ENCODE measurements at regions of chr7 and their contacts with region 1.

Region 1: GRCh38 chr7:50206453-50207250 is 97.9 kb upstream of the IKZF1 start:
- DNase-seq: no peak
- H3K4me3 ChIP-seq: no peak overlapping the region
- H3K27ac ChIP-seq: no peak overlapping the region
- H3K4me1 ChIP-seq: peaks cover 34% of the 10 kb centered on the region
- CTCF ChIP-seq: no peak

Region 2: DNA sequence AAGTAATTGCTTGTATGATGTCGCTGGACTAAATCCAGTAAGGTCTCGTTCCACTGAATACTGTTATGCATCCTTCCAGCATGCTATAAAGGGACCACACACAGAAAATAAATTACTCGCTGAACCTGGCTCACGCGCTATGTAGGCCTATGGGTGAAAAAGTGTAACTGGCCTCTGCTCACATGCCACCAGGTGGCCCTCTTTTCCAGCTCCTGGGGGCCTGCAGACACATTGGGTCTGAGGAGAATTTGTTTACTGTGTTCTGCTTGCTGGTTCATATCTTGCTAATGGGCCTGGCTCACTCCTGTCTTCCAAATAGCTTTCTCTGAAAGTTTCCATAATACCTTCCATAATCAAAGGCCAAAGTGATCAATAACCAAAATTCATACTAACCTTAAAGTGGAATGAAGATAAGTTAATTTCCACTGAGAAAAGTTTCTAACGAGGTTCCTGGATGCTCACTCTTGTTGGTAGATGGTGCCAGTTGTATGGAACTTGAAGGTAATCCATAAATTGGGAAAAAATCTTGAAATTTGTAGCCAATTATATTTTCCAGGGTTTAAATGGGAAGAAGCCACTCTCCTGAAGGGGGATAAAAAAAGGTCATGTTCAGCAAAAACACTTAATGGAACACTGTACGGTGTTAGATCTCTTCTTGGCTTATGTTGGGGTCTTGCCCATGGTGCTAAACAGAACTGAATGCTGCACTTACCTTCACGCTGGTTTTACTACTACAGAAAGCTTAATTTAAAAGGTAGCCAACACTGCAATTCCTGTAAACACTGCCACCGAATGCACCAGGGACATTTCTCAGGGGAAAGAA is 86.6 kb before region 1 on chr7:
- CTCF ChIA-PET with region 1: interaction called, 3 read pairs
- POLR2A ChIA-PET with region 1: interaction called, 4 read pairs
- intact Hi-C with region 1: loop called (anchors 1 kb)
- DNase-seq: peak; percentile 80
- H3K4me3 ChIP-seq: no peak overlapping the region
- H3K27ac ChIP-seq: no peak overlapping the region
- H3K4me1 ChIP-seq: peaks cover 22% of the 10 kb centered on the region
- CTCF ChIP-seq: peak; percentile 97

Region 3: DNA sequence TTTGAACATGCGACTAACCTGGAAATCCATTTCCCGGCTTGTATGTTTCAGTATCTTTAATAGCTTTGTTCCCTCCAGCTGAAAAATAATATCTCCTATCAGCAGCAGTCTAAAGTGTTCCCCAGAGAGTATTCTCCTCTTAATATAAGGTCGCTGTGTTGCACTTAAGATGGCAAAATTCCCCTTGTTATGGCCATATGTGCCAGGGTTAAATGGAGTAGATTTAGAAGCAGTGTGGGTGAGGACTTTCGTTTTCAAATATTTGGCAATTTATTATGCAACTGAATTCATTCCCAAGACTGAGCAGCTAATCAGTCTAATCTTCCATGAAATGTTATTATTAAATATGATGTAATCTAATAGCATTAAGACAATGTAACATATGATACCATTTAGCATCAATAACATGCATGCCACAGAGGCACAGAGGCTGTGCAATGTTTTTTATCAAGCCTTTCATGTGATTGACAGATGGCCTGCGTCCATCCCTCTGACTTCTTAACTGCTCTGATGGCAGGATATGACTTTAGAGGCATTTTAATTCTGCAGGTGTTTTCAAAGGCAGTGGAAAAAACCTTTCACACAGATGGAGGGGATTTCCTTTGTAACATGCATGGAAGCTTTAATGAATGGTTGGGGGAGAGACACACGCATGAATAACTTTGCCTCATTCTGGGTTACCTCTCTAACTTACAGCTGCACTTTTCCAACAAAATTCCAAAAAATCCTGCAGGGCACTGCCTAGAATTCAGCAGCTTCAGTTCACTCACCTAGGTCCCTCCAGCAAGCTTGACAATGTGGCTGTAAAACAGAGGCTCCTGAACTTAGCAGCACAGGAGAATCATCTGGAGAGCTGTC is 58.5 kb before region 1 on chr7:
- CTCF ChIA-PET with region 1: interaction called, 3 read pairs
- POLR2A ChIA-PET with region 1: interaction called, 12 read pairs
- intact Hi-C with region 1: no loop called
- DNase-seq: peak; percentile 97
- H3K4me3 ChIP-seq: peak overlapping the region; percentile 52
- H3K27ac ChIP-seq: peak overlapping the region; percentile 99
- H3K4me1 ChIP-seq: peaks cover 99% of the 10 kb centered on the region
- CTCF ChIP-seq: no peak

Region 4: GRCh38 chr7:50166997-50167965 is 39.4 kb before region 1 on chr7:
- CTCF ChIA-PET with region 1: no interaction called
- POLR2A ChIA-PET with region 1: no interaction called
- intact Hi-C with region 1: no loop called
- DNase-seq: peak; percentile 84
- H3K4me3 ChIP-seq: peak overlapping the region; percentile 10
- H3K27ac ChIP-seq: peak overlapping the region; percentile 61
- H3K4me1 ChIP-seq: peaks cover 61% of the 10 kb centered on the region
- CTCF ChIP-seq: no peak

Region 5: DNA sequence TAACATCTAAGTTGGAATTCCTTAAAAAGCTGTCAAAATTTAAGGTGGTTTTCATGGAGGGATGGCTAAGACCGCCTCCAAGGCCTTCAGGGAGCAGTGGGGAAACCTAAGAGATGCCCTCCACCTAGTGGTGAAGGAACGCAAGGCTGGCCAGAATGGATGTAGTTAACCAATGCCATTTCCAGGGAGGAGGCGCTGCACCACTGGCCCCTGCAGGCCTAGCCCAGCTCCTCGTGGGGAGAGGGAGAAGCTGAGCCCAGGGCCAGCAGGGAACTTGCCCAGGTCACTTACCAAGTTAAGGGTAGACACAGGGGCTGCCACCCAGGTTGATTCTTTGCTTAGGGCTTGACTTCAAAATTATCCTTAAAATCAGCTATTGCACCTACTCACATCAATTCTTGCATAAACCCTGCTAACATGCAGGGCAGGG is 211.4 kb after region 1 on chr7:
- CTCF ChIA-PET with region 1: interaction called, 6 read pairs
- POLR2A ChIA-PET with region 1: interaction called, 3 read pairs
- intact Hi-C with region 1: loop called (anchors 1 kb)
- DNase-seq: peak; percentile 88
- H3K4me3 ChIP-seq: no peak overlapping the region
- H3K27ac ChIP-seq: no peak overlapping the region
- H3K4me1 ChIP-seq: peaks cover 29% of the 10 kb centered on the region
- CTCF ChIP-seq: peak; percentile 98

Region 6: DNA sequence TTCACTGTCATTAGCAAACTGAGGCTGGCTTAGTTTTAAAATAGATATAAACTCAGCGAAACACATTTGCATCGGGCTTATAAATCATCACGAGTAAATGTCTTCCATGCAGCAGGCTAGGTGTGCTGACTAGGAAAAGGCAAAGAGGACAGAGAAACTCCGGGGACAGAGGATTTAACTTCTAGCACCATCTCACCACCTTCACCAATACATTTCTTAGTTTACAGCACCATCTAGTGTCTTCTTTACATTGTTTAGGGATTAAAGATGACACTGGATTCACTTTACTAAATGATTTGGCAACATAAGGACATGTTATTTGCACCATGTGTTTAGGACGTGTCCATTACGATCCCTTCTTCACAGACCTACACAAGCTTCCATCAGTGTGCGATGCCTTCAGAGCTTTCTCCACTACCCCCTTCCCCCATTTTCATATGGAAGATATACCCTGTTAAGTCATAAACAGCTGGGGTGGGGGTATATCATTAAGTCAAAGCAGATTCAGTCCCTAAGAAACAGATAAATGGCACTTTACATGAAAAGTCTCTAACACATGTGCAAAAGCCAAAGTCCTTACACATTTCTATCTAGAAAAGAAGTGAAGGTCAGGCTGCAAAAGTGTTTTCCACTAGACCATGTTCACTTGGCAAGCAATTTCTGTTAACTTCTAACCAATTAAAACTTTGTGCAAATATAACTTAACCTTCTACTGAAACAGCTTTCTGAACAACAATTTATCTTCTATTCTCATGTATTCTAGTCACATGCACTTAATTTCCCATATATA is 472.8 kb after region 1 on chr7:
- CTCF ChIA-PET with region 1: no interaction called
- POLR2A ChIA-PET with region 1: no interaction called
- intact Hi-C with region 1: loop called (anchors 5 kb)
- DNase-seq: peak; percentile 48
- H3K4me3 ChIP-seq: no peak overlapping the region
- H3K27ac ChIP-seq: no peak overlapping the region
- H3K4me1 ChIP-seq: no peaks in the 10 kb centered on the region
- CTCF ChIP-seq: peak; percentile 70

Measured in OCI-LY7 (cell line).